ENCODE measurements at regions of chr12 and their contacts with region 1.

Region 1: DNA sequence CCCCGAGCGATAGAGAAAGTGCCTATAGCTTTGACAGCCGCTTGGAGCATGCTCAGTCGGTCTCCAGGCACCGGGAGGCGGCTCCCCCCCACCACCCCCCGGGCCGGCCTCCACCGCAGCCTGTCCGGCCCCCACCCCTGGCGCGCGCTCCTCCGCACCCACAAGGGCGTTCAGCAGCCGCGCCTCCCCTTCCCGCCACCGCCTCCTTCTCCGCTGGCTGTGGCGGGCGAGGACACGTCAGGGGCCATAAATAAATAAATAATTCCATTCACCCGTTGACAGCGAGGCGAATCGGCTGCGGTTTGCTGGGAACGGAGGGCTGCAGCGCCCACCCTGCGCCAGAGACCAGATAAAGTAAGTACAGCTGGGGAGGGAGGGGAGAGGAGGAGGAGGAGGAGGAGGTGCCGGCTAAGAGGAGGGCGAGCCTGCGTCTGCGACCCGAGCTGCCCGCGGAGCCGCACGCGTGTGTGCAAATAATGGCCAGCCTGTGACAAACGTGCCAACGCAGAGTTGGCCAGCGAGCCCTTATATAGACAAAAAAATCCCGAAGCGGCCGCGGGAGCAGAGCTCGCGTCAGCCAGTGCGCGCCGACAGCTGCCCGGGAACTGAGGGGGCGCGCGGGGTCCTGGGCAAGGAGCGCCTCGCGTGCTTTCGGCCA is at the start of gene SLC16A7:
- DNase-seq: peak; percentile 89
- H3K4me3 Mint-ChIP-seq: peak within 1 kb of the TSS; percentile 81
- H3K27ac Mint-ChIP-seq: peak within 1 kb of the TSS; percentile 100
- H3K4me1 Mint-ChIP-seq: peaks cover 45% of the 10 kb centered on the region
- H3K27me3 Mint-ChIP-seq: no peaks in the 10 kb centered on the region
- total RNA-seq, gene SLC16A7: 35.8 to 36.6 TPM

Region 2: GRCh38 chr12:57941165-57941894 is 1654.7 kb before region 1 on chr12 and contains the start of gene ATP23:
- CTCF ChIA-PET with region 1: no interaction called
- POLR2A ChIA-PET with region 1: no interaction called
- intact Hi-C with region 1: loop called (anchors 5 kb)
- DNase-seq: peak; percentile 92
- H3K4me3 Mint-ChIP-seq: peak within 1 kb of the TSS; percentile 86
- H3K27ac Mint-ChIP-seq: peak within 1 kb of the TSS; percentile 93
- H3K4me1 Mint-ChIP-seq: peaks cover 43% of the 10 kb centered on the region
- H3K27me3 Mint-ChIP-seq: no peaks in the 10 kb centered on the region
- total RNA-seq, gene ATP23: 14.9 to 16.3 TPM

Region 3: GRCh38 chr12:59403259-59403932 is 192.6 kb before region 1 on chr12:
- CTCF ChIA-PET with region 1: no interaction called
- POLR2A ChIA-PET with region 1: no interaction called
- intact Hi-C with region 1: loop called (anchors 1 kb)
- DNase-seq: peak; percentile 30
- H3K4me3 Mint-ChIP-seq: no peak overlapping the region
- H3K27ac Mint-ChIP-seq: no peak overlapping the region
- H3K4me1 Mint-ChIP-seq: peaks cover 10% of the 10 kb centered on the region
- H3K27me3 Mint-ChIP-seq: peaks cover 2% of the 10 kb centered on the region

Region 4: DNA sequence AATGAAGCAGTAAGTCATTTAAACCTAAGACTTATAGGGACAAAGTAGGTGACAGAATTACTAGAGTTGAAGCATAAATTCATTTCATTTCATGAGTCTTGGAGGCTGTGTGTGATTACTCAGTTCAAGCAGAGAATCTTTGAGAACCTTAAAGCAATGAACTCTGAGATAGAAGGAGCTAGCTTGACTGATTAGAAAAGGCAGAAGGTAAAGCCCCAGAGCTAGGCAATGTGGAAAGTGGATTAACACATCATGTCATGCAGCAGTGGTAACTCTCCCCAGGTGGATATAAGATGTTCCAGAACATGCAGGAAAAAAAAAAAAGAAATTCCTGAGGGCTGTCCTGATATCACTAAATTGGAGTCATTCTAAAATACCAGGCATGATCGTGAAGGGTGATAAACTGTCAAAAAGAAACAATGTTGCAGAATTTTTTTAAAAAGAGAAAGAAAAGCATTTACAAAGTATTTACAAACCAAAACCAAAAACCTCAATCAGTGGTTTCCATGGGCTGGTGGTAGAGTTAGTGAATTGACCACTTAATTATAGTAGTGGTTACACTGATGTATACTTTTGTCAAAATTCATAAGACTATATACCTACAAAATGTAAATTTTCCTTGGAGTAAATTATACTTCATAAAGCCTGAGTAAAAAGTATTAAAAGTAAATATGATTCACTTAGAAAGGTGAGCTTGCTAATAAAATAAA is 12.9 kb before region 1 on chr12:
- CTCF ChIA-PET with region 1: no interaction called
- POLR2A ChIA-PET with region 1: no interaction called
- intact Hi-C with region 1: loop called (anchors 2 kb)
- DNase-seq: no peak
- H3K4me3 Mint-ChIP-seq: no peak overlapping the region
- H3K27ac Mint-ChIP-seq: no peak overlapping the region
- H3K4me1 Mint-ChIP-seq: peaks cover 16% of the 10 kb centered on the region
- H3K27me3 Mint-ChIP-seq: no peaks in the 10 kb centered on the region

Region 5: DNA sequence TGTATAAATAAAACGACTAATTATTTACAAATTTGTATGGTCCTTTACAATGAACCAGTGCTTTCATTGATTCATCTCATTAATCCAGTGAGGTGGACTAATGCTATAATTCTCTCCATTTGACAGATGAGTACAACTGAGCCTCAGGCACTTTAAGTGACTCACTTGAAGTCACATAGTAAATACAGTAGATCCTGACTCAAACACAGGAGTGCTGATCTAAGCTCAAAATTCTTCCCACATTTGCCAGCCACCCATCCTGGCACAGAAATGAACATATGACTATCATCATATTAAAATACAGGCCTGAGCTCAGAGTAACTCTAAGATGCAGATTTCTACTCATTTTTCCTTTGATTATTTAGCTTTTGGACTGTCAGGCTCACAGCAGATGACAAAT is 30.4 kb after region 1 on chr12:
- CTCF ChIA-PET with region 1: no interaction called
- POLR2A ChIA-PET with region 1: interaction called, 3 read pairs
- intact Hi-C with region 1: loop called (anchors 1 kb)
- DNase-seq: peak; percentile 21
- H3K4me3 Mint-ChIP-seq: no peak overlapping the region
- H3K27ac Mint-ChIP-seq: no peak overlapping the region
- H3K4me1 Mint-ChIP-seq: peaks cover 55% of the 10 kb centered on the region
- H3K27me3 Mint-ChIP-seq: no peaks in the 10 kb centered on the region

Region 6: DNA sequence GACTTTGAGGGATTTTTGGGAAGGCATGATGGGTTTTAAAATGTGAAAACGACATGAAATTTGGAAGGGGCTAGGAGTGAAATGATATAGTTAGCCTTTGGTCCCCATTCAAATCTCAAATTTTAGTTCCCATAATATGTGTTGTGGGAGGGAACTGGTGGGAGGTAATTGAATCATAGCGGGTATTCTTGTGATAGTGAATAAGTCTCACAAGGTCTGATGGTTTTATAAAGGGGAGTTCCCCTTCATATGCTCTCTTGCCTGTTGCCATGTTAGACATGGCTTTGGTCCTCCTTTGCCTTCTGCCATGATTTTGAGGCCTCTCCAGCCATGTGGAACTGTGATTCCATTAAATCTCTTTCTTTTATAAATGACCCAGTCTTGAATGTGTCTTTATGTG is 72.7 kb after region 1 on chr12:
- CTCF ChIA-PET with region 1: no interaction called
- POLR2A ChIA-PET with region 1: no interaction called
- intact Hi-C with region 1: no loop called
- DNase-seq: no peak
- H3K4me3 Mint-ChIP-seq: no peak overlapping the region
- H3K27ac Mint-ChIP-seq: no peak overlapping the region
- H3K4me1 Mint-ChIP-seq: peaks cover 16% of the 10 kb centered on the region
- H3K27me3 Mint-ChIP-seq: no peaks in the 10 kb centered on the region

Region 7: GRCh38 chr12:59808317-59808910 is 212.4 kb after region 1 on chr12:
- CTCF ChIA-PET with region 1: interaction called, 7 read pairs
- POLR2A ChIA-PET with region 1: no interaction called
- intact Hi-C with region 1: loop called (anchors 5 kb)
- DNase-seq: no peak
- H3K4me3 Mint-ChIP-seq: no peak overlapping the region
- H3K27ac Mint-ChIP-seq: no peak overlapping the region
- H3K4me1 Mint-ChIP-seq: no peaks in the 10 kb centered on the region
- H3K27me3 Mint-ChIP-seq: no peaks in the 10 kb centered on the region